B cell (primary cell): ENCODE measurements at regions of chr17 and their contacts with region 1.

Region 1: GRCh38 chr17:4997302-4998026 is at the starts of genes INCA1 and KIF1C:
- DNase-seq: peak; percentile 95
- ATAC-seq: peak; percentile 96
- H3K4me3 ChIP-seq: peak within 1 kb of the TSS; percentile 34 to 73 (median 66)
- H3K4me3 Mint-ChIP-seq: peak within 1 kb of the TSS; percentile 85
- H3K27ac ChIP-seq: peak within 1 kb of the TSS in 1 of 2 donors; percentile 65
- H3K27ac Mint-ChIP-seq: peak within 1 kb of the TSS; percentile 83
- H3K4me1 ChIP-seq: peaks cover 22 to 26% of the 10 kb centered on the region in 2 donors
- H3K4me1 Mint-ChIP-seq: peaks cover 21% of the 10 kb centered on the region
- H3K27me3 ChIP-seq: peaks cover 0 to 13% (median 2%) of the 10 kb centered on the region in 4 experiments
- H3K27me3 Mint-ChIP-seq: no peaks in the 10 kb centered on the region
- CTCF ChIP-seq: no peak
- total RNA-seq, gene INCA1: 0.30 and 0.51 TPM in 2 replicates
- total RNA-seq, gene KIF1C: 29.6 and 41.5 TPM in 2 replicates

Region 2: DNA sequence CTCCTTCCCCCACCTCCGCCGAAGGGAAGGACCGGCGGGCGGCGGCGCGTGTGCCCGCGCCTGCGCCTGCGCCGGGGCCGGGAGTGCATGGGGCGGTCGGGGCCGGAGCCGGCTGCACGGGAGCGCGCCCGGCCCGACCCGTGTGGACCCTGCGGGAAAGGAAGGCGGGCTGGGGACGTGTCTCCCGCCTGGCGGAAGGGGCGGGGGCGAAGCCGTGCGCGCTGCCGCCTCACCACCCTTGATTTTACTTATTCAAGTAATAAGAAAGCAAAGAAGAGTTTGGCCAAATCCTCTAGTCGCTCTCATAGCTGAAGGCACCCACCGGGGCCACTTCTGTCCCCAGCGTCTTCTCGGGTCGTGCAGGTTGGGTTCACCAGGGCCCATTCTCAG is 48.5 kb before region 1 on chr17:
- CTCF ChIA-PET with region 1: interaction called, 4 read pairs
- POLR2A ChIA-PET with region 1: interaction called, 16 read pairs
- intact Hi-C with region 1: loop called (anchors 1 kb)
- DNase-seq: peak; percentile 90
- ATAC-seq: peak; percentile 50
- H3K4me3 ChIP-seq: peak overlapping the region; percentile 59 to 99 (median 96)
- H3K4me3 Mint-ChIP-seq: peak overlapping the region; percentile 98
- H3K27ac ChIP-seq: peak overlapping the region; percentile 73 to 93
- H3K27ac Mint-ChIP-seq: peak overlapping the region; percentile 99
- H3K4me1 ChIP-seq: peaks cover 37 to 45% of the 10 kb centered on the region in 2 donors
- H3K4me1 Mint-ChIP-seq: peaks cover 46% of the 10 kb centered on the region
- H3K27me3 ChIP-seq: no peaks in the 10 kb centered on the region
- H3K27me3 Mint-ChIP-seq: no peaks in the 10 kb centered on the region
- CTCF ChIP-seq: no peak

Region 3: DNA sequence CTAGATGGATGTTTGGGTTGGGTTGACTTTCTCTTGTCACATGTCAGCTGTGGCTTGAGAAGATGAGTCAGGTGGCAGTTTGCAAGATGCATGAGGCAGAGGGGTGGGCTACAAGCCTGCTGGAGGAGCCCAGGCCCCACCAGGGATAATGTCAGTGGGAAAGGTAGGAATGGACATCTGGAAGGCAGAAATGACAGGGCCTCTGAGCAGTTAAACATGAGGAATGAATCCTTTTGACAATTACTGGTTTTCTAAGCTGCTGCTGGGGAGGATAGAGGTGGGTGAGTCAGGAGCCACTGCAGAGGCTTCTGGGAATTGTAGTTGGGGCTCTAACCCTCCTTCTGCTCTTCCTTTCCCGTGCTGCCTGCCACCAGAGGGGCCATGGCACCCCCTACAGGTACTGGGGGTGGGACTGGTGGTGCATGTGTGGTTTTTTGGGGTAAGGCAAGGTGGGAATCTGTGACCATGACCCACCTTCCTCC is 22.1 kb after region 1 on chr17:
- CTCF ChIA-PET with region 1: interaction called, 6 read pairs
- POLR2A ChIA-PET with region 1: interaction called, 9 read pairs
- intact Hi-C with region 1: loop called (anchors 2 kb)
- DNase-seq: peak; percentile 62
- ATAC-seq: peak; percentile 52
- H3K4me3 ChIP-seq: no peak overlapping the region
- H3K4me3 Mint-ChIP-seq: no peak overlapping the region
- H3K27ac ChIP-seq: no peak overlapping the region
- H3K27ac Mint-ChIP-seq: peak overlapping the region; percentile 50
- H3K4me1 ChIP-seq: peaks cover 6 to 14% of the 10 kb centered on the region in 2 donors
- H3K4me1 Mint-ChIP-seq: peaks cover 13% of the 10 kb centered on the region
- H3K27me3 ChIP-seq: peaks cover 0 to 32% (median 1%) of the 10 kb centered on the region in 4 experiments
- H3K27me3 Mint-ChIP-seq: no peaks in the 10 kb centered on the region
- CTCF ChIP-seq: no peak

Region 4: GRCh38 chr17:5055543-5055942 is 58.1 kb after region 1 on chr17:
- CTCF ChIA-PET with region 1: interaction called, 4 read pairs
- POLR2A ChIA-PET with region 1: no interaction called
- intact Hi-C with region 1: loop called (anchors 5 kb)
- DNase-seq: no peak
- ATAC-seq: no peak
- H3K4me3 ChIP-seq: no peak overlapping the region
- H3K4me3 Mint-ChIP-seq: no peak overlapping the region
- H3K27ac ChIP-seq: no peak overlapping the region
- H3K27ac Mint-ChIP-seq: no peak overlapping the region
- H3K4me1 ChIP-seq: peaks cover 0 to 8% of the 10 kb centered on the region in 2 donors
- H3K4me1 Mint-ChIP-seq: peaks cover 17% of the 10 kb centered on the region
- H3K27me3 ChIP-seq: peaks cover 0 to 5% (median 0%) of the 10 kb centered on the region in 4 experiments
- H3K27me3 Mint-ChIP-seq: no peaks in the 10 kb centered on the region
- CTCF ChIP-seq: no peak